Activated B cell treated with CpG ODN at 0.5 μM for 24 hours (primary cell): ENCODE measurements at regions of chr15 and their contacts with region 1.

Region 1: GRCh38 chr15:45442500-45443135 is 64.3 kb upstream of the GATM start:
- DNase-seq: no peak
- ATAC-seq: no peak
- H3K4me3 Mint-ChIP-seq: no peak overlapping the region
- H3K27ac Mint-ChIP-seq: no peak overlapping the region
- H3K4me1 Mint-ChIP-seq: no peaks in the 10 kb centered on the region
- H3K27me3 Mint-ChIP-seq: peaks cover 5% of the 10 kb centered on the region
- CTCF ChIP-seq: no peak

Region 2: GRCh38 chr15:44598892-44599291 is 843.7 kb before region 1 on chr15:
- CTCF ChIA-PET with region 1: no interaction called
- POLR2A ChIA-PET with region 1: no interaction called
- intact Hi-C with region 1: no loop called
- DNase-seq: no peak
- ATAC-seq: no peak
- H3K4me3 Mint-ChIP-seq: no peak overlapping the region
- H3K27ac Mint-ChIP-seq: peak overlapping the region; percentile 15
- H3K4me1 Mint-ChIP-seq: peaks cover 5% of the 10 kb centered on the region
- H3K27me3 Mint-ChIP-seq: no peaks in the 10 kb centered on the region
- CTCF ChIP-seq: no peak

Region 3: DNA sequence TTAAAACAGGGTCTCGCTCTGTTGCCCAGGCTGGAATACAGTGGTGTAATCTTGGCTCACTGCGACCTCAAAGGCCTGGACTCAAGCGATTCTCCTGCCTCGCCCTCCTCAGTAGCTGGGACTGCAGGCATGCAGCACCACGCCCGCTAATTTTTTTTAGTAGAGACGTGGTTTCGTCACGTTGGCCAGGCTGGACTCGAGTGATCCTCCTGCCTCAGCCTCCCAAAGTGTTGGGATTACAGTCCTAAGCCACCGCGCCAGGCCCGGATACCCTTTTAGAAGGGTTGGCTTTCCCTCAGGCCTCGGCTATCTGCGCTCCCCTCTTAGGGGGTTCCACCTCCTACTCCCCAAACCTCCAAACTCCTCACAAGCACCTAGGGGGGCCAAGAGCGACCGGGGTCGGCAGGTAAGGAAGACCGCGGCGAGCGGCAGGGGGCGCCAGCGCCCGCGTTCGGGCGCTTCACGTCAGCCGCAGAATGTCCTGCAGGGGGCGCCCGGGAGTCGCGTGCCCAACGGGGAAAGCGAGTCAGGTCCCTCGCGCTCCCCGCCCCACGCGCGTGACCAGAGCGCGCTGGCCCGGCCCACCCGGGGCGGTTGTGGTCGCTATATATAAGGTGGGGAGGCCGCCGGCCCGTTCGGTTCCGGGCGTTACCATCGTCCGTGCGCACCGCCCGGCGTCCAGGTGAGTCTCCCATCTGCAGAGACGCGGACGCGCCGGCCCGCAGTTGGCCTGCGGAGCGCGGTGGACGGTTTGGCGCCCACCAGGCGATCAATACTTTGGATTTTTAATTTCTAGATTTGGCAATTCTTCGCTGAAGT is 12.4 kb before region 1 on chr15:
- CTCF ChIA-PET with region 1: interaction called, 11 read pairs
- POLR2A ChIA-PET with region 1: no interaction called
- intact Hi-C with region 1: no loop called
- DNase-seq: peak; percentile 87
- ATAC-seq: peak; percentile 94
- H3K4me3 Mint-ChIP-seq: peak overlapping the region; percentile 35
- H3K27ac Mint-ChIP-seq: no peak overlapping the region
- H3K4me1 Mint-ChIP-seq: peaks cover 4% of the 10 kb centered on the region
- H3K27me3 Mint-ChIP-seq: peaks cover 2% of the 10 kb centered on the region
- CTCF ChIP-seq: peak; percentile 98

Region 4: DNA sequence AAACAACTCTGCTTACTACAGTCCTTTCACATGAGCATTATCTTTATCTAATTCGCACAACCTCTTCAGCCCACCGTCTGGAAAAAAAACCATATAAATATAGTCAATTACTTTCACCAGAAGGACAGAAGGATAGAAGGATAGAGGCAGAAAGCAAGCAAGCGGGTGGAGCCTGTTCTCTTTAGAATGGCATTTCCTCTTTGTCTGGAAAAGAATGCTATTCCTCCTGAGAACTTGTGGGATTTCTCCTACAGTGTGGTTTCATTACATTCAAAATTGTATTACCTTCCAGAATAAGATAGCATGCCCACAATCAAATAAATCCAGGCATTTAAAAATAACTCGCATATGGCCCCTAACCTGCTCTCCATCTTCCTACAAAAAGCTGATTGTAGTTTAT is 56.8 kb after region 1 on chr15:
- CTCF ChIA-PET with region 1: no interaction called
- POLR2A ChIA-PET with region 1: no interaction called
- intact Hi-C with region 1: no loop called
- DNase-seq: no peak
- ATAC-seq: no peak
- H3K4me3 Mint-ChIP-seq: no peak overlapping the region
- H3K27ac Mint-ChIP-seq: no peak overlapping the region
- H3K4me1 Mint-ChIP-seq: no peaks in the 10 kb centered on the region
- H3K27me3 Mint-ChIP-seq: no peaks in the 10 kb centered on the region
- CTCF ChIP-seq: no peak